ENCODE measurements at regions of chr7 and their contacts with region 1.

Region 1: GRCh38 chr7:140192620-140193019 is 15.8 kb upstream of the KDM7A start:
- DNase-seq: no peak
- ATAC-seq: no peak
- H3K4me3 ChIP-seq: no peak overlapping the region
- H3K27ac ChIP-seq: peak overlapping the region in 2 of 10 donors; percentile 17 to 26
- H3K4me1 ChIP-seq: peaks cover 0 to 36% (median 10%) of the 10 kb centered on the region in 9 donors
- H3K27me3 ChIP-seq: no peaks in the 10 kb centered on the region
- CTCF ChIP-seq: no peak

Region 2: DNA sequence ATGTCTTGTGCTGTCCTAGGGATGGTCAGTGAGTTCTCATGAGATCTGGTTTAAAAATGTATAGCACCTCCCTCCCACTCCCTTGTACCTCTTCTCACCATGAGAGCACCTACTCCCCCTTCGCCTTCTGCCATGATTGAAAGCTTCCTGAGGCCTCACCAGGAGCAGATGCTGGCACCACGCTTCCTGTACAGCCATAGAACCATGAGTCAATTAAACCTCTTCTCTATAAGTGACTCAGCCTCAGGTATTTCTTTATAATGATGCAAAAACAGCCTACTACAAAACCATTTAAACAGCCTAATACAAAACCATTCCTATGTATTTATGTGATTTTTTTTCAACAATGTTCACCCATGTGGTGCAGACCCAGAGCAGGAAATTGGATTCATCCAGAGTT is 47.8 kb before region 1 on chr7:
- intact Hi-C with region 1: no loop called
- DNase-seq: no peak
- ATAC-seq: peak in 1 of 8 donors; percentile 26
- H3K4me3 ChIP-seq: no peak overlapping the region
- H3K27ac ChIP-seq: no peak overlapping the region
- H3K4me1 ChIP-seq: peaks cover 0 to 36% (median 24%) of the 10 kb centered on the region in 9 donors
- H3K27me3 ChIP-seq: no peaks in the 10 kb centered on the region
- CTCF ChIP-seq: no peak

Region 3: GRCh38 chr7:140316165-140316661 is 123.6 kb after region 1 on chr7:
- intact Hi-C with region 1: loop called in 1 of 10 experiments (anchors 10 kb)
- DNase-seq: peak; percentile 40 to 53
- ATAC-seq: peak; percentile 79 to 99 (median 86)
- H3K4me3 ChIP-seq: peak overlapping the region in 7 of 10 donors; percentile 19 to 34 (median 30)
- H3K27ac ChIP-seq: peak overlapping the region in 5 of 10 donors; percentile 25 to 74 (median 36)
- H3K4me1 ChIP-seq: peaks cover 0 to 63% (median 13%) of the 10 kb centered on the region in 9 donors
- H3K27me3 ChIP-seq: no peaks in the 10 kb centered on the region
- CTCF ChIP-seq: no peak

Measured in heart right ventricle (tissue), 16 donors.